HepG2 (cell line): ENCODE measurements at regions of chr12 and their contacts with region 1.

Region 1: GRCh38 chr12:53379389-53380103 is 430 bp upstream of the SP1 start:
- DNase-seq: peak; percentile 100
- ATAC-seq: peak; percentile 94
- H3K4me3 ChIP-seq: peak overlapping the region in 2 of 3 experiments; percentile 73 to 87; a peak in 2 of 6 replicates
- H3K27ac ChIP-seq: peak overlapping the region; percentile 79
- H3K4me1 ChIP-seq: peaks cover 47% of the 10 kb centered on the region
- H3K27me3 ChIP-seq: no peaks in the 10 kb centered on the region; a peak in 1 of 5 replicates
- CTCF ChIP-seq: no peak
- EP300 ChIP-seq: no peak
- POLR2A ChIP-seq: peak in 1 of 2 experiments; percentile 45; a peak in 2 of 4 replicates
- RAD21 ChIP-seq: no peak

Region 2: GRCh38 chr12:53352331-53353256 is 27.0 kb before region 1 on chr12:
- CTCF ChIA-PET with region 1: interaction called, 22 read pairs
- POLR2A ChIA-PET with region 1: interaction called, 5 read pairs
- in situ Hi-C with region 1: no loop called
- intact Hi-C with region 1: loop called (anchors 1 kb)
- DNase-seq: peak; percentile 80
- ATAC-seq: peak; percentile 98
- H3K4me3 ChIP-seq: no peak overlapping the region
- H3K27ac ChIP-seq: no peak overlapping the region
- H3K4me1 ChIP-seq: peaks cover 22% of the 10 kb centered on the region
- H3K27me3 ChIP-seq: no peaks in the 10 kb centered on the region
- CTCF ChIP-seq: peak; percentile 93
- EP300 ChIP-seq: no peak
- POLR2A ChIP-seq: no peak
- RAD21 ChIP-seq: peak; percentile 89

Region 3: DNA sequence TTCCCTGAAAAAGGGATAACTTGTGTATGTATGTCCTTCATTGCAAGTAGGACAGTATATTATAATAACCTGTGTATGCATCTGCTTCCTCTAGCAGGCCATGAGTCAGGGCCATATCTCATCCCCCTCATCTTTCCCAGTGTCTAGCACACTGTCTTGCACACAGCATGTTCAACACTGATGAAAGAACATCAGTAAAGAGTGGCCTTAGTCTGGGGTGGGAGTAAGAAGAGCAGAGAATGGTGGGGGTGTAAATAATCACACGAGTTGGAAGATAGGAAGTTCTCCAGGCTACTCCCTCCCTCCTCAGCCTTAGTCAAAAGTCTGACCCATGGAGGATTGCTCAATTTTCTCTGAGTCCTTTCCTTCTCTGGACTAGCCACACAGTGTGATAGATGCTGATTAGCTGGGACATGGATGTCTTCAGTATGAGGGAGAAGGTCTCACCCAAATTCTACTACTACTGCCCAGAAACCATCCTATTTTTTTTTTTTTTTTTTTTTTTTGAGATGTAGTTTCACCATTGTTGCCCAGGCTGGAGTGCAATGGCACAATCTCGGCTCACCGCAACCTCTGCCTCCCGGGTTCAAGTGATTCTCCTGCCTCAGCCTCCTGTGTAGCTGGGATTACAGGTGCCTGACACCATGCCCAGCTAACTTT is 14.2 kb before region 1 on chr12:
- CTCF ChIA-PET with region 1: no interaction called
- POLR2A ChIA-PET with region 1: interaction called, 11 read pairs
- in situ Hi-C with region 1: no loop called
- intact Hi-C with region 1: no loop called
- DNase-seq: no peak
- ATAC-seq: peak; percentile 52
- H3K4me3 ChIP-seq: no peak overlapping the region
- H3K27ac ChIP-seq: no peak overlapping the region
- H3K4me1 ChIP-seq: peaks cover 10% of the 10 kb centered on the region
- H3K27me3 ChIP-seq: no peaks in the 10 kb centered on the region
- CTCF ChIP-seq: no peak
- EP300 ChIP-seq: no peak
- POLR2A ChIP-seq: no peak
- RAD21 ChIP-seq: no peak

Region 4: DNA sequence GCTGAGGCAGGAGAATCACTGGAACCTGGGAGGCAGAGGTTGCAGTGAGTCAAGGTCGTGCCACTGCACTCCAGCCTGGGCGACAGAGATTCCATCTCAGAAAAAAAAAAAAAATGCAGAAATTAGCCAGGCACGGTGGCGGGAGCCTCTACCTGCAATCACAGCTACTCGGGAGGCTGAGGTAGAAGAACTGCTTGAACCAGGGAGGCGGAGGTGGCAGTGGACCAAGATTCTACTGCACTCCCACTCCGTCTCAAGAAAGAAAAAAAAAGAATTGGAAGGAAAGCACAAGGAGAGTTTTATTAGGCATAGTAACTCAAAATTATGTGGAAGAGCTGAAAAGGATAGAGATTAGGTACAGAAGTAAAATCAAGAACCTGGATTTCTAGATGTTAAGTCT is 23.3 kb after region 1 on chr12:
- CTCF ChIA-PET with region 1: no interaction called
- POLR2A ChIA-PET with region 1: no interaction called
- in situ Hi-C with region 1: no loop called
- intact Hi-C with region 1: no loop called
- DNase-seq: no peak
- ATAC-seq: no peak
- H3K4me3 ChIP-seq: no peak overlapping the region
- H3K27ac ChIP-seq: no peak overlapping the region
- H3K4me1 ChIP-seq: peaks cover 5% of the 10 kb centered on the region
- H3K27me3 ChIP-seq: no peaks in the 10 kb centered on the region; a peak in 1 of 5 replicates
- CTCF ChIP-seq: no peak
- EP300 ChIP-seq: no peak
- POLR2A ChIP-seq: no peak
- RAD21 ChIP-seq: no peak

Region 5: DNA sequence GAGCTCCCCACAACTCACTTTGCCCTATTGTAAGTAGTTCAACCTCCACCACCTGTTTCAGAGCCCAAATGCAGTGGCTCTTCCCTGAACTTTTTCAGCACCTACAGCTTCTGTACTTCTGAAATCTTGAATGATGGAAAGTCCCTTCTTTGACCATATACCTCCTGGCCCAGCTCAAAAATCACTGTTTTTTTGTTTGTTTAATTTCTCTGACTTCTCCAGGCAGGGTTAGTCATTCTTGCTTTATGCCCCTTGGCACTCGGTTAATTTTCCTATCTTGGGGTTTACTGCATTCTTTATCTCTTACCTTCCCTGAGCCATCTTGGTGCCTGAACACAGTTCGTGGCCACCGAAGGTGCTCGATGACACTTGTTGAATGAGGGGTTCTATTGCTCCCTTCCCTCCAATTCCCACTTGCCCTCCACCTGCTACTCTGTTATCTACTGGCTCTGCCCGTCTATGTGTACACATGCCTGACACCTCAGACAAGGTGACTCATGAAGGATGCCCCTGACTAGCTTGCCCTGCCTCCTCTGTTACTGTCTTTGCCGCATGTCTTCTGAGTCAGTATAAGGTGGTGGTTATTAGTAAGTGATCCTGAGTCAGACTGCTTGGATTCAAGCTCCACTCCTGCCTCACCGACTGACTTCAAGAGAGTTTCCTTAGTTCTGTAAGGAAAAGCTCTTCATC is 48.5 kb after region 1 on chr12:
- CTCF ChIA-PET with region 1: no interaction called
- POLR2A ChIA-PET with region 1: interaction called, 5 read pairs
- in situ Hi-C with region 1: no loop called
- intact Hi-C with region 1: loop called (anchors 5 kb)
- DNase-seq: no peak
- ATAC-seq: no peak
- H3K4me3 ChIP-seq: no peak overlapping the region
- H3K27ac ChIP-seq: no peak overlapping the region
- H3K4me1 ChIP-seq: peaks cover 51% of the 10 kb centered on the region
- H3K27me3 ChIP-seq: 0 out of 5 replicates have a peak, but pooled peaks cover 0 to 4% of the 10 kb centered on the region in 2 experiments
- CTCF ChIP-seq: no peak
- EP300 ChIP-seq: no peak
- POLR2A ChIP-seq: no peak
- RAD21 ChIP-seq: no peak

Region 6: DNA sequence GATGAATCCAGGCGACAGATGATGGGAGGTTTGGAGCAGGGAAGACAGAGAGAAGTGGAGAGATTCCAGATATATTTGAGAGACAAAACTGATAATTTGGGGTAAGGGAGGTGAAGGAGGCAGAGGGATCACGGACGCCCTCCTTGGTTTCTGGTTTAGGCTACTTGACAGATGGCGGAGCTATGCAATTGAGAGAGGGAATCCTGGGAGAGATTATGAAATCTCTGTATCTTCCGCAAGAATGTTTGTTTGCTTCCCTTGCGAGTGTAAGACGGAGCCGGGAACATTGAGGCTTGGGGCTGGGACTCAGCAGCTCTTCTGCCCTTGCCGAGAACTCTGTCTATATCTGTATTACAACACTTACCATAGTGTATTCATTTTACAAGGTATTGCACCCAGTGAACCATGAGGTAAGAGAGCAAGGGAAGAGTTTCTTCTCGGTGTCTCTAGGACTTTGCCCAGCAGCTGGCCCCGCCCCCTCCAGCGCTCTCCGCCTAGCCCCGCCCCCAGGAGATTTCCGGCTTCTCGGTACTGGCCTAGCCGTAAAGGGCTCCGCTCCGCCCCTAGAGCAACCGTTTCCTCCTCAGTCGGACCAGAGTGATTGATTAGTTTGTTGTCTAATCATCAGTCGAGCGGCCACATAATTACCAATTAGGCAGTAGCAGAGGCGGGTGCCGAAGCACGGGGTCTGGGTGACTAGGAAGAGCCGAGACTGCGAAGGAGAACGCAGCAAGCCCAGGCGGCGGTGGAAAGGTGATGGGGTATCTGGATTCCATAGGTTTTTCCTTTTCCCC is 61.7 kb after region 1 on chr12 and contains the start of gene PRR13:
- CTCF ChIA-PET with region 1: no interaction called
- POLR2A ChIA-PET with region 1: interaction called, 22 read pairs
- in situ Hi-C with region 1: no loop called
- intact Hi-C with region 1: no loop called
- DNase-seq: peak; percentile 98
- ATAC-seq: peak; percentile 97
- H3K4me3 ChIP-seq: peak within 1 kb of the TSS; percentile 71 to 78 (median 77)
- H3K27ac ChIP-seq: peak within 1 kb of the TSS; percentile 90
- H3K4me1 ChIP-seq: peaks cover 50% of the 10 kb centered on the region
- H3K27me3 ChIP-seq: no peaks in the 10 kb centered on the region; a peak in 1 of 5 replicates
- CTCF ChIP-seq: no peak
- EP300 ChIP-seq: 0 out of 4 replicates have a peak, but pooled peaks of 1 of the 2 experiments have one; percentile 10
- POLR2A ChIP-seq: peak; percentile 90 to 91
- RAD21 ChIP-seq: 0 out of 2 replicates have a peak, but pooled peaks have one; percentile 8
- total RNA-seq, gene PRR13: 102 and 109 TPM in 2 replicates